WTC11 (cell line): ENCODE measurements at regions of chr1 and their contacts with region 1.

Region 1: DNA sequence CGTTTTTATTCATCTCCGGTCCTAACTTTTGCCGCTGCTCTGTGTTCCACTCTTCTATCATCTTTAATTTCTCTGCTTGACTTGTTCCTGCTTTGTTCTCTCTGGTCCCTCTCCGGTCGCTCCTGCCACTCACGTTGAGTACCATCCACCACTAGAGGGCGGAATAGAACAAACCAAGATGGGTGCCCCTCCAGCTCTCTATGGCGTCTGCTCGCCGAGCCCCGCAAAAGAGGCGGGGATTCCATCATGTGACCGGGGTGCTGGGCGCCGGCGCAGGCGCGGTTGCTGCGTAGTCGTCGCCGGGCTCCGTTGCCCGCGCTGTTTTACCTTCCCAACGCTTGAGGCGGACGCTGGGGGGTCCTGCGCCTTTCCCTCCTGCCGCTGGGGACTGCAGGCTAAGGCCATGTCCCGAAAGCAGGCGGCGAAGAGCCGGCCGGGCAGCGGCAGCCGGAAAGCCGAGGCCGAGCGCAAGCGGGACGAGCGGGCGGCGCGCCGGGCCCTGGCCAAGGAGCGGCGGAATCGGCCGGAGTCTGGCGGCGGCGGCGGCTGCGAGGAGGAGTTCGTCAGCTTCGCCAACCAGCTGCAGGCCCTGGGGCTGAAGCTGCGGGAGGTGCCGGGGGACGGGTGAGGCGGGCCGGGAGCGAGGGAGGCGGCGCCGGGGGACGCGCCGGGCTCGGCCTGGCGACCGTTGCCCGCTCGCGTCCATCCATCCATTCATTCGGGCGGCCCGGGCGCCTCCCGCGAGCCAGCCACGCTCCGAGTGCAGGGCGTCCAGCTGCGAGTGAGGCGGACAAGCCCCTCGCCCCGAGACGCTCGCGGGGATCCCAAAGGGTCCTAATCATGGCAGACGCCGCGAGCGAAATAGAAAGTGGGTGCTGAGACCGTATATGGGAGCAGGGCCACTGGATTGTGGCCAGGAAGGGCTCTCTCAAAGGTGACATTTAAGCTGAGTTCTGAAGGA is at the start of gene OTUD3:
- DNase-seq: peak; percentile 94
- ATAC-seq: peak; percentile 96
- H3K4me3 Mint-ChIP-seq: peak within 1 kb of the TSS; percentile 82
- H3K27ac Mint-ChIP-seq: no peak within 1 kb of the TSS
- H3K4me1 Mint-ChIP-seq: peaks cover 22% of the 10 kb centered on the region
- H3K27me3 Mint-ChIP-seq: no peaks in the 10 kb centered on the region; the same call in 1 of the 2 replicates
- CTCF ChIP-seq: peak; percentile 77
- total RNA-seq, gene OTUD3: 16.1 to 19.4 TPM (median 16.4 TPM) in 3 replicates

Region 2: GRCh38 chr1:19715334-19716203 is 166.8 kb before region 1 on chr1:
- CTCF ChIA-PET with region 1: interaction called, 19 read pairs
- POLR2A ChIA-PET with region 1: no interaction called
- DNase-seq: peak; percentile 99
- ATAC-seq: peak; percentile 97
- H3K4me3 Mint-ChIP-seq: peak overlapping the region; percentile 15; the same call in 1 of the 2 replicates
- H3K27ac Mint-ChIP-seq: no peak overlapping the region; the same call in 1 of the 2 replicates
- H3K4me1 Mint-ChIP-seq: peaks cover 15% of the 10 kb centered on the region
- H3K27me3 Mint-ChIP-seq: no peaks in the 10 kb centered on the region; the same call in 1 of the 2 replicates
- CTCF ChIP-seq: peak; percentile 74

Region 3: GRCh38 chr1:19762175-19762779 is 120.1 kb before region 1 on chr1:
- CTCF ChIA-PET with region 1: interaction called, 10 read pairs
- POLR2A ChIA-PET with region 1: interaction called, 3 read pairs
- DNase-seq: peak; percentile 73
- ATAC-seq: peak; percentile 83
- H3K4me3 Mint-ChIP-seq: no peak overlapping the region
- H3K27ac Mint-ChIP-seq: no peak overlapping the region
- H3K4me1 Mint-ChIP-seq: peaks cover 12% of the 10 kb centered on the region
- H3K27me3 Mint-ChIP-seq: no peaks in the 10 kb centered on the region; the same call in 1 of the 2 replicates
- CTCF ChIP-seq: peak; percentile 73

Region 4: GRCh38 chr1:19772053-19772452 is 110.3 kb before region 1 on chr1:
- CTCF ChIA-PET with region 1: interaction called, 16 read pairs
- POLR2A ChIA-PET with region 1: no interaction called
- DNase-seq: peak; percentile 40
- ATAC-seq: peak; percentile 58
- H3K4me3 Mint-ChIP-seq: no peak overlapping the region
- H3K27ac Mint-ChIP-seq: no peak overlapping the region
- H3K4me1 Mint-ChIP-seq: peaks cover 19% of the 10 kb centered on the region
- H3K27me3 Mint-ChIP-seq: peaks cover 7% of the 10 kb centered on the region
- CTCF ChIP-seq: no peak

Region 5: GRCh38 chr1:19786988-19787423 is 95.4 kb before region 1 on chr1:
- CTCF ChIA-PET with region 1: interaction called, 10 read pairs
- POLR2A ChIA-PET with region 1: no interaction called
- DNase-seq: peak; percentile 68
- ATAC-seq: peak; percentile 92
- H3K4me3 Mint-ChIP-seq: no peak overlapping the region; the same call in 1 of the 2 replicates
- H3K27ac Mint-ChIP-seq: no peak overlapping the region
- H3K4me1 Mint-ChIP-seq: peaks cover 28% of the 10 kb centered on the region
- H3K27me3 Mint-ChIP-seq: peaks cover 45% of the 10 kb centered on the region
- CTCF ChIP-seq: no peak

Region 6: DNA sequence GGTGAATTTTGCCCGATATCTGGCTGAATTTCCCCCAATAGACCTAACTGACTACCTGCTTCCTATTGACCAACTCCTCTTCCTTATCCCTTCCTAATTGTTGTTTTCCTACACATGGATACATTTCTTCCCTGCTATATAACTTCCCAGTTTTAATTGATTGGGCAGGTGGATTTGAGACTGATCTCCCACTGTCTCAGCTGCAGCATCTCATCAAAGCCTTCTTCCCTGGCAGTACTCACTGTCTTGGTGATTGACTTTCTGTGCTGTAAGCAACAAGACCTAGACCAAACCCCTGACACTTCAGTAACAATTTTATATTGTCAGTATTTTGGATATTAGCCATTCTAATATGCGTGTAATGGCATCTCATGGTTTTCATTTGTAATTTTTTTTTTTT is 108.3 kb after region 1 on chr1:
- CTCF ChIA-PET with region 1: no interaction called
- POLR2A ChIA-PET with region 1: no interaction called
- DNase-seq: no peak
- ATAC-seq: peak; percentile 75
- H3K4me3 Mint-ChIP-seq: peak overlapping the region; percentile 61
- H3K27ac Mint-ChIP-seq: peak overlapping the region; percentile 99
- H3K4me1 Mint-ChIP-seq: peaks cover 73% of the 10 kb centered on the region
- H3K27me3 Mint-ChIP-seq: peaks cover 3% of the 10 kb centered on the region
- CTCF ChIP-seq: no peak

Region 7: GRCh38 chr1:20093940-20094391 is 211.6 kb after region 1 on chr1:
- CTCF ChIA-PET with region 1: no interaction called
- POLR2A ChIA-PET with region 1: no interaction called
- DNase-seq: no peak
- ATAC-seq: no peak
- H3K4me3 Mint-ChIP-seq: no peak overlapping the region
- H3K27ac Mint-ChIP-seq: no peak overlapping the region
- H3K4me1 Mint-ChIP-seq: peaks cover 5% of the 10 kb centered on the region
- H3K27me3 Mint-ChIP-seq: peaks cover 31% of the 10 kb centered on the region
- CTCF ChIP-seq: no peak